Mammary epithelial cell (primary cell): ENCODE measurements at regions of chr19 and their contacts with region 1.

Region 1: GRCh38 chr19:28497137-28497536 is 715.8 kb downstream of the UQCRFS1 start:
- DNase-seq: peak; percentile 73
- H3K4me3 ChIP-seq: no peak overlapping the region
- H3K27ac ChIP-seq: no peak overlapping the region
- H3K4me1 ChIP-seq: no peaks in the 10 kb centered on the region
- H3K27me3 ChIP-seq: no peaks in the 10 kb centered on the region
- CTCF ChIP-seq: no peak

Region 2: DNA sequence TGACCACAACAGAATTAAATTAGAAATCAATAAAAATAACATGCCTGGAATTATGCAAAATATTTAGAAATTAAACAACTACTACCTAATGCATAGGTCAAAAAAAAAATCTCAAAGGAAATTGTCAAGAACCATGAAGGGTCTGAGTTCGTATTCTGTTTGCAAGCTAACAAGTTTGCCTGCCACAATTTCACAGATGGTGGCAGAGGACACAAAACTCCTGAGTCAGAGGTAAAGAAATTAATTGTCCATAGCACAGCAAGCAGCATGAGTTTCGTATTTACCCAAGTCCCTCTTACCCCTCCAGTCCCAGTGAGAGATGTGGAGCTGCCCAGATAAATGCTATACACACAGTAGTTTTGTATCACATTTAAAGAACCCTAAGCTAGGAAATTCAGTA is 39.9 kb after region 1 on chr19:
- CTCF ChIA-PET with region 1: no interaction called
- dilution Hi-C with region 1: no loop called
- in situ Hi-C with region 1: no loop called
- intact Hi-C with region 1: loop called (anchors 2 kb)
- DNase-seq: no peak
- H3K4me3 ChIP-seq: no peak overlapping the region
- H3K27ac ChIP-seq: no peak overlapping the region
- H3K4me1 ChIP-seq: no peaks in the 10 kb centered on the region
- H3K27me3 ChIP-seq: no peaks in the 10 kb centered on the region
- CTCF ChIP-seq: no peak

Region 3: GRCh38 chr19:28633319-28634018 is 136.3 kb after region 1 on chr19:
- CTCF ChIA-PET with region 1: no interaction called
- dilution Hi-C with region 1: no loop called
- in situ Hi-C with region 1: no loop called
- intact Hi-C with region 1: no loop called
- DNase-seq: peak; percentile 46
- H3K4me3 ChIP-seq: no peak overlapping the region
- H3K27ac ChIP-seq: no peak overlapping the region
- H3K4me1 ChIP-seq: no peaks in the 10 kb centered on the region
- H3K27me3 ChIP-seq: no peaks in the 10 kb centered on the region
- CTCF ChIP-seq: peak; percentile 95 to 98